ENCODE measurements at regions of chr17 and their contacts with region 1.

Region 1: GRCh38 chr17:48011405-48012150 is 26.0 kb downstream of the COPZ2 start:
- DNase-seq: peak; percentile 82
- ATAC-seq: peak; percentile 84
- H3K4me3 ChIP-seq: peak overlapping the region; percentile 73
- H3K27ac ChIP-seq: no peak overlapping the region
- H3K4me1 ChIP-seq: peaks cover 12% of the 10 kb centered on the region
- H3K27me3 ChIP-seq: no peaks in the 10 kb centered on the region
- CTCF ChIP-seq: peak; percentile 81

Region 2: DNA sequence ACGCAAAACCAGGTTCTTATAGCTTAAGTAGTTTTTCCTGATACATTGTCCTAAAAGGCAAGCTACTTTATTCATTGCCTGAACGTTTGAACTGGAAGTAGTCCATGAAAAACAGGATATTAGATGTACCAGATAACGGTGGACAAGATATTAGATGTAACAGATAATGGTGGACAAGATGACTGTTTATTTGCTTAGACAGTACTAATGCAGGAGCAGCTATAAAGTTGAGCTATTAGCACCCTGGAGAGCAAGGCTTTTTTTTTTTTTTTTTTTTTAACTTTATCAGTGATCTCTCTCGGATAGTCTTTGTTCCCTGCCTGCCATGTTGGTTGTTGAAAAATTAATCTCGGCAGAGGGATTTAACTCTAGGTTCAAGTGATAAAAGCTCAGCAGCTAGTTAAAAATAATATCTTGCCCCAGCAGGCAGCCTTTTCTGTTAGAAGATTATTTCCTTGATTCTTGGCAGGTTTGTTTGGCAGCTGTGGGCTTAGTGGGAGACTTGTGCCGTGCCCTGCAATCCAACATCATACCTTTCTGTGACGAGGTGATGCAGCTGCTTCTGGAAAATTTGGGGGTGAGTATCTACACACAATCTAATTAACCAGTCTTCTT is 334.9 kb before region 1 on chr17:
- CTCF ChIA-PET with region 1: no interaction called
- POLR2A ChIA-PET with region 1: interaction called, 13 read pairs
- intact Hi-C with region 1: no loop called
- DNase-seq: no peak
- ATAC-seq: no peak
- H3K4me3 ChIP-seq: no peak overlapping the region
- H3K27ac ChIP-seq: no peak overlapping the region
- H3K4me1 ChIP-seq: no peaks in the 10 kb centered on the region
- H3K27me3 ChIP-seq: no peaks in the 10 kb centered on the region
- CTCF ChIP-seq: no peak

Region 3: GRCh38 chr17:48074315-48075081 is 62.9 kb after region 1 on chr17:
- CTCF ChIA-PET with region 1: no interaction called
- POLR2A ChIA-PET with region 1: no interaction called
- intact Hi-C with region 1: no loop called
- DNase-seq: peak; percentile 95
- ATAC-seq: peak; percentile 91
- H3K4me3 ChIP-seq: no peak overlapping the region
- H3K27ac ChIP-seq: no peak overlapping the region
- H3K4me1 ChIP-seq: no peaks in the 10 kb centered on the region
- H3K27me3 ChIP-seq: no peaks in the 10 kb centered on the region
- CTCF ChIP-seq: peak; percentile 92

Region 4: GRCh38 chr17:48181653-48182052 is 170.1 kb after region 1 on chr17:
- CTCF ChIA-PET with region 1: no interaction called
- POLR2A ChIA-PET with region 1: no interaction called
- intact Hi-C with region 1: no loop called
- DNase-seq: peak; percentile 69
- ATAC-seq: peak; percentile 77
- H3K4me3 ChIP-seq: no peak overlapping the region
- H3K27ac ChIP-seq: no peak overlapping the region
- H3K4me1 ChIP-seq: peaks cover 11% of the 10 kb centered on the region
- H3K27me3 ChIP-seq: peaks cover 10% of the 10 kb centered on the region; the same call in 1 of the 2 replicates
- CTCF ChIP-seq: peak; percentile 92

Measured in PC-3 (cell line).